ENCODE measurements at regions of chr9 and their contacts with region 1.

Region 1: DNA sequence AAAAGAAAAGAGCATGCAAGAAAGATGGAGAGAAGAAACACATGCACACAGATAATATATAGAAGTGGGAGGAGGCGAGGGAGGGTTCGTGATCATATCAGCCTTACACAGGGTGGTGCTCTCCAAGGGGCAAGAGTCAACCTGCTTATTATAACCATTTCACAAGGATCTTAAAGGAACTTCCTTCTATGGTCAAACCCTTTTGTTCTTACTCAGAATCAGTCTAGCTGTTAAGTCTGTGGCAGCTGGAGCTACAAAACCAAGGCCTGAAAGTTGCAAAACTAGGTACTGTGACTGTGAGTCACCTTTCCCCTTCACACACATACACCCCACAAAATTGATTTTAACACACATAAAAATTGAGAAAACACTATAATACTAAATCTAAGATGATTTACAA is 18.5 kb upstream of the ERMP1 start:
- DNase-seq: peak; percentile 90
- ATAC-seq: peak; percentile 96
- H3K4me3 ChIP-seq: no peak overlapping the region
- H3K27ac ChIP-seq: peak overlapping the region; percentile 54; the same call in 1 of the 2 replicates
- H3K4me1 ChIP-seq: peaks cover 37% of the 10 kb centered on the region
- H3K27me3 ChIP-seq: no peaks in the 10 kb centered on the region
- CTCF ChIP-seq: peak in 1 of 3 experiments; percentile 11; a peak in 1 of 6 replicates
- EP300 ChIP-seq: peak; percentile 34 to 82; a peak in 2 of 4 replicates
- POLR2A ChIP-seq: no peak
- RAD21 ChIP-seq: no peak

Region 2: DNA sequence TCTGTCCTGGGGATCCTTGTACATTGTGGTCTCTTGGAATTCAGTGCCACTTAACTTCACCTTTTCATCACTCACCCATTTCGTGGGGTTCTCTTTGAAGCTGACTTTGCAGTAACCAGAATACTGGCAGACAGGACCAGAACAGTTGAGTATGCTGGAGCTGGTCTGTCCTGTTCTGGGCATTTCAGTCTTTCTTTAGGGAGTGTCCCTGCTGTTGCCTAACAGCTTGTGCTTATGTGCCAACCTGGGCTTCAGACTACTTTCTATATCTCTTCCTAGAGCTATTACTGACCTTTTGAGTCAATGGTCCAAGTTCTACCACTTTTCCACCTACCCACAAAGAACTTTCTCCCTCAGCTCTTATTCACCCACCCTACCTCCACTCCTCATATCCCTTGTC is 656.0 kb before region 1 on chr9:
- CTCF ChIA-PET with region 1: no interaction called
- POLR2A ChIA-PET with region 1: no interaction called
- RAD21 ChIA-PET with region 1: no interaction called
- SMC1A ChIA-PET with region 1: no interaction called
- in situ Hi-C with region 1: no loop called
- intact Hi-C with region 1: no loop called
- DNase-seq: no peak
- ATAC-seq: no peak
- H3K4me3 ChIP-seq: no peak overlapping the region
- H3K27ac ChIP-seq: no peak overlapping the region
- H3K4me1 ChIP-seq: no peaks in the 10 kb centered on the region
- H3K27me3 ChIP-seq: no peaks in the 10 kb centered on the region; a peak in 1 of 4 replicates
- CTCF ChIP-seq: no peak
- EP300 ChIP-seq: no peak
- POLR2A ChIP-seq: no peak
- RAD21 ChIP-seq: no peak

Region 3: DNA sequence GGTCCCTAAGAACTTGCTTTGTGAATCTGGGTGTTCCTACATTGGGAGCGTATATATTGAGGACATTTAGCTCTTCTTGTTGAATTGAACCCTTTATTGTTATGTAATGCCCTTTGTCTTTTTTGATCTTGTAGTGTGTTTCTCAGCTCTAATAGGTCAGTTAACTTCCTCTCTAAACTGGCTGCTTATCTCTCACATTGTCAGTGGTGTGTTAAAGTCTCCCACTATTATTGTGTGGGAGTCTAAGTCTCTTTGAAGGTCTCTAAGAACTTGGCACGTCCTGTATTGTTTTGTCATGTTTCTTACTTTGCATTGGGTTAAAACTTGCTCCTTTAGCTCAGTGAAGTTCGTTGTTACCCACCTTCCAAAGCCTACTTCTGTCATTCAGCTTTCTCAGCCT is 186.4 kb before region 1 on chr9:
- CTCF ChIA-PET with region 1: no interaction called
- POLR2A ChIA-PET with region 1: no interaction called
- RAD21 ChIA-PET with region 1: no interaction called
- SMC1A ChIA-PET with region 1: no interaction called
- in situ Hi-C with region 1: no loop called
- intact Hi-C with region 1: no loop called
- DNase-seq: no peak
- ATAC-seq: peak; percentile 27
- H3K4me3 ChIP-seq: no peak overlapping the region
- H3K27ac ChIP-seq: no peak overlapping the region
- H3K4me1 ChIP-seq: no peaks in the 10 kb centered on the region
- H3K27me3 ChIP-seq: no peaks in the 10 kb centered on the region
- CTCF ChIP-seq: no peak
- EP300 ChIP-seq: no peak
- POLR2A ChIP-seq: no peak
- RAD21 ChIP-seq: no peak

Region 4: DNA sequence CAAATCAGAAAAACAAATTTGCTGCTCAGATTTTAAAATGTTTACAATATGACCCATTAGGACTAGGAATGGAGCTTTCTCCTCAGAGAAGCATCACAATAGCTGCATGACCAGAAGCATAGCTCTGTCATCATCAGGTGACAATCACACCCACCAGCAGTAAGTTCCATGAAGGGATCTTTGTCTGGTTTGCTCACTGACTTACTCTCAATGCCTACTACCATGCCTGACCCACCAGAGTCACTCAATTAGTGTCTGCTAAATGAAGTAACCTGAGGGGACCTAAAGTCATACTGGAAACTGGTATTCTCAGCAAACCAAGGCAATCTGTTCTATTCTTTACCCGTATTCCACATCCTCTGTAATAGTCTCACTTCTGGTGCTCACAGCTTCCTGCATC is 26.2 kb before region 1 on chr9:
- CTCF ChIA-PET with region 1: interaction called, 36 read pairs
- POLR2A ChIA-PET with region 1: interaction called, 142 read pairs
- RAD21 ChIA-PET with region 1: interaction called, 59 read pairs
- SMC1A ChIA-PET with region 1: interaction called, 58 read pairs
- in situ Hi-C with region 1: no loop called
- intact Hi-C with region 1: no loop called
- DNase-seq: no peak
- ATAC-seq: peak; percentile 16
- H3K4me3 ChIP-seq: no peak overlapping the region
- H3K27ac ChIP-seq: no peak overlapping the region
- H3K4me1 ChIP-seq: peaks cover 2% of the 10 kb centered on the region; the same call in 1 of the 2 replicates
- H3K27me3 ChIP-seq: no peaks in the 10 kb centered on the region
- CTCF ChIP-seq: no peak
- EP300 ChIP-seq: no peak
- POLR2A ChIP-seq: no peak
- RAD21 ChIP-seq: no peak

Region 5: GRCh38 chr9:5869315-5870019 is 18.0 kb after region 1 on chr9:
- CTCF ChIA-PET with region 1: interaction called, 13 read pairs
- POLR2A ChIA-PET with region 1: interaction called, 3 read pairs
- RAD21 ChIA-PET with region 1: interaction called, 4 read pairs
- SMC1A ChIA-PET with region 1: interaction called, 10 read pairs
- in situ Hi-C with region 1: no loop called
- intact Hi-C with region 1: no loop called
- DNase-seq: no peak
- ATAC-seq: peak; percentile 69
- H3K4me3 ChIP-seq: no peak overlapping the region
- H3K27ac ChIP-seq: no peak overlapping the region
- H3K4me1 ChIP-seq: no peaks in the 10 kb centered on the region
- H3K27me3 ChIP-seq: no peaks in the 10 kb centered on the region
- CTCF ChIP-seq: peak in 2 of 3 experiments; percentile 57 to 65; a peak in 5 of 6 replicates
- EP300 ChIP-seq: no peak
- POLR2A ChIP-seq: no peak
- RAD21 ChIP-seq: peak; percentile 48

Region 6: GRCh38 chr9:5879419-5880181 is 28.2 kb after region 1 on chr9:
- CTCF ChIA-PET with region 1: interaction called, 23 read pairs
- POLR2A ChIA-PET with region 1: interaction called, 3 read pairs
- RAD21 ChIA-PET with region 1: interaction called, 23 read pairs
- SMC1A ChIA-PET with region 1: interaction called, 18 read pairs
- in situ Hi-C with region 1: no loop called
- intact Hi-C with region 1: no loop called
- DNase-seq: no peak
- ATAC-seq: no peak
- H3K4me3 ChIP-seq: no peak overlapping the region
- H3K27ac ChIP-seq: no peak overlapping the region
- H3K4me1 ChIP-seq: peaks cover 5% of the 10 kb centered on the region; the same call in 1 of the 2 replicates
- H3K27me3 ChIP-seq: no peaks in the 10 kb centered on the region
- CTCF ChIP-seq: no peak
- EP300 ChIP-seq: no peak
- POLR2A ChIP-seq: no peak
- RAD21 ChIP-seq: no peak

Measured in GM12878 (cell line).